WTC11 (cell line): ENCODE measurements at regions of chr1 and their contacts with region 1.

Region 1: DNA sequence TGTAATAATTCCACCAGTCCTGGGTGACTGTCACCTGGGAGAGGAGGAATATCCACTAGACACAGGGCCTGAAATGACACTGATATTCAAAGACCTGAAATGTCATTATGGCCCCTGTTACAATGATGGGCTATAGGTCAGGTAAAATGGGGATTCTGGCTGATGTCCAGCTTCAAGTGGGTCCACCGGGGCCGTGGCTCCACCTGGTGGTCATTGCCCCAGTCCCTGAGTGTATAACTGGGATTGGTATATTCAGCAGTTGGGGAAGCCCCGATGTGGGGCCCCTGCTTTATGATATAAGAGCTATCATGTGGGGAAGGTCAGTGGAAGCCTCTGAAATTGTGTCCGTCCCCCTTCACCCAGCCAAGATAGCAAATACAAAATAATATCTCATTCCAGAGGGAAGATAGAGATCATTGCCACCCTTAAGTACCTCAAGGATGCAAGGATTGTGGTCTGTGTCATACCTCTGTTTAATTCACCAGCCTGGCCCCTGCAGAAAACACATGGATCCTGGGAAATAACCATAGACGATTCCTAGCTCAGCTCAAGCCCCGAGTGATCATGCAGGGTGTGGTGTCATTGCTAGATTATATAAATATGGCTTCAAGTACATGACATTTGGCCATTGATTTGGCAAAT is 19.4 kb downstream of the PLEKHO1 start:
- DNase-seq: peak; percentile 83
- ATAC-seq: peak; percentile 76
- H3K4me3 Mint-ChIP-seq: no peak overlapping the region
- H3K27ac Mint-ChIP-seq: no peak overlapping the region
- H3K4me1 Mint-ChIP-seq: peaks cover 7% of the 10 kb centered on the region
- H3K27me3 Mint-ChIP-seq: no peaks in the 10 kb centered on the region
- CTCF ChIP-seq: peak; percentile 64

Region 2: DNA sequence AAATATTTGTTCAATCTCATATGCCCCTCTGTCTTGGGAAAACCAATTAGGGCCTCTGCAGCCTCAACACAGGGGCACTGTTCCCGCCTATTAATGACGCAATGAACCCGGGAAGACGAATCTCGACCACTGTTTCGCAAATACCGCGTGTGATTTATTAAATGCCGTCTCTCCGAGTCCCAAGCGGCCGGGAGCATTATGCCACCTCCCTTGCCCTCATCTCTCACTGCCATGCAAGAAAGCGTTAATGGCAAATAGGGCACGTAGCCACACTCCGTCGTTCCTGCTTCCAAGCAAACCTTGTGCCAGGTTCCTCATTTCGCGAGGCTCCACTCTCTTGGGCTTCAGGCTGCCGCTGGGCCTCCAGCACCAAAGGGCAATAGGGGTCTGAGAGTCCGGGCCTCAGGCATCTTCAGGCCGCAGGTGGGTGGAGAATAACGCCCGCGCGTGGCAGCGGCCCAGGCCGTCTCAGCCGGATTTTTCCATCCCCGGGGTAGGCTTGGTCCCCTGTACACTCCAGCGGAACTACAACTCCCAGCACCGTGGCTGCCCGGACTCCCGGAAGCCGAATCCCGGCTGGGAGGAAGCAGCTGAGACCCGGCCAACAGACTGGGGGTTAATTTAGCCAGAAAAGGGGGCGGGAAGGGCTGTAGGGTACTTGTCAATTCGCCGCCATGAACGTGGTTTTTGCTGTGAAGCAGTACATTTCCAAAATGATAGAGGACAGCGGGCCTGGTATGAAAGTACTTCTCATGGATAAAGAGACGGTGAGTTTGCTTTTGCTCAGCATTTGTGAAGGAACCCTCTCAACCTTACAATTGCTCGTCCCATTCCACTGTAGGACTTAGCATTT is 101.7 kb before region 1 on chr1 and contains the start of gene VPS45:
- CTCF ChIA-PET with region 1: interaction called, 10 read pairs
- POLR2A ChIA-PET with region 1: no interaction called
- DNase-seq: peak; percentile 90
- ATAC-seq: peak; percentile 98
- H3K4me3 Mint-ChIP-seq: peak within 1 kb of the TSS; percentile 96
- H3K27ac Mint-ChIP-seq: peak within 1 kb of the TSS; percentile 98
- H3K4me1 Mint-ChIP-seq: peaks cover 20% of the 10 kb centered on the region
- H3K27me3 Mint-ChIP-seq: no peaks in the 10 kb centered on the region
- CTCF ChIP-seq: no peak
- total RNA-seq, gene VPS45: 26.1 to 28.2 TPM (median 27.3 TPM) in 3 replicates

Region 3: GRCh38 chr1:150121236-150121862 is 47.7 kb before region 1 on chr1:
- CTCF ChIA-PET with region 1: no interaction called
- POLR2A ChIA-PET with region 1: no interaction called
- DNase-seq: no peak
- ATAC-seq: no peak
- H3K4me3 Mint-ChIP-seq: no peak overlapping the region
- H3K27ac Mint-ChIP-seq: no peak overlapping the region; the same call in 1 of the 2 replicates
- H3K4me1 Mint-ChIP-seq: no peaks in the 10 kb centered on the region
- H3K27me3 Mint-ChIP-seq: no peaks in the 10 kb centered on the region
- CTCF ChIP-seq: no peak

Region 4: DNA sequence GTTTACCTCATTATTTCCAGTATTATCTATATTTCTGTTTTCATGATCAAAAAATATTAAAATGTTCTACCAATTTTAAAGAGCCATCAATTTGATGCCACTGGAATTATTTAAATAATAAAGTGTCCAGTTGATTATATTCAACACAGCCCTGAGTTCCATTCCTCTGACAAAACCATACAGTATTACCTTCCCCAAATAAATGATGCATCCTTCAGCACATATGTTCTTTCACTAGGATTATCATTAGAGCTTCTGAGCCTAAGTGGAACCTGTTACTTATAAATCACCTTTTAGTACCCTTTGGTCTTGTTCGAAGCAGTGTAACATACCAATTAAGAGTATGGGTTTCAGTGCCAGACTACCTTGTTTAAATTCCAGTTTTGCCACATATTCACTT is 36.7 kb before region 1 on chr1:
- CTCF ChIA-PET with region 1: no interaction called
- POLR2A ChIA-PET with region 1: no interaction called
- DNase-seq: no peak
- ATAC-seq: no peak
- H3K4me3 Mint-ChIP-seq: no peak overlapping the region
- H3K27ac Mint-ChIP-seq: no peak overlapping the region
- H3K4me1 Mint-ChIP-seq: no peaks in the 10 kb centered on the region
- H3K27me3 Mint-ChIP-seq: no peaks in the 10 kb centered on the region
- CTCF ChIP-seq: no peak

Region 5: GRCh38 chr1:150259758-150260669 is 90.9 kb after region 1 on chr1:
- CTCF ChIA-PET with region 1: no interaction called
- POLR2A ChIA-PET with region 1: no interaction called
- DNase-seq: peak; percentile 79
- ATAC-seq: peak; percentile 83
- H3K4me3 Mint-ChIP-seq: peak overlapping the region; percentile 83
- H3K27ac Mint-ChIP-seq: peak overlapping the region; percentile 95
- H3K4me1 Mint-ChIP-seq: peaks cover 44% of the 10 kb centered on the region
- H3K27me3 Mint-ChIP-seq: no peaks in the 10 kb centered on the region
- CTCF ChIP-seq: no peak